ENCODE measurements at regions of chr14 and their contacts with region 1.

Region 1: DNA sequence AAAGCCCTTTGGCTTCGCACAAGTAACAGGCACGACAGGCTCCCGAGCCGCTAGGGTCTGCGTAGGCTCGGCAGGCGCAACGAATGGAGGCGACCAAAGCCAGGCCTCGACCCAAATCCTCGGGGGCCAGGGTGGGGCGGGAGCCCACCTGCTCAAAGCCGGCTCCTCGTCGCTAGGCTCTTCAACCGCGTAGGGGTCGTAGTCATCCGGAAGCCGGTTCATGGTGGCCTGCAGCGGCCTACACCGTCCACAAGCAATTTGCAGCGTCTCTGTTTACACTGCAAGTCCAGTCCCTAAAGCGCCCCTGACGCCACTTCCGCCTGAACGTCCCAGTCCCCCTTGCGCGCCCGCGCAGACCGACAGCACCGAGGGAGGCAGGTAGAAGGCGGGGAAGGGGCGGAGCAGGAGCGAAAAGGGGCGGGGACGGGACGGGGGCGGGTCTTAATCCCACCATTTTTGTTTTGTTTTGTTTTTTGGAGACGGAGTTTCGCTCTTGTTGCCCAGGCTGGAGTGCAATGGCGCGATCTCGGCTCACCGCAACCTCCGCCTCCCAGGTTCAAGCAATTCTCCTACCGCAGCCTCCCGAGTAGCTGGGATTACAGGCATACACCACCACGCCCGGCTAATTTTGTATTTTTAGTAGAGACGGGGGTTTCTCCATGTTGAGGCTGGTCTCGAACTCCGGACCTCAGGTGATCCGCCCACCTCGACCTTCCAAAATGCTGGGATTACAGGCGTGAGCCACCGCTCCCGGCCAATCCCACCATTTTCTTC is at the start of gene EAPP:
- DNase-seq: peak; percentile 95 to 99 (median 98)
- ATAC-seq: peak; percentile 99 to 100 (median 100)
- H3K4me3 ChIP-seq: peak within 1 kb of the TSS; percentile 61 to 90 (median 66)
- H3K27ac ChIP-seq: peak within 1 kb of the TSS; percentile 79 to 97 (median 86)
- H3K4me1 ChIP-seq: peaks cover 8 to 15% (median 11%) of the 10 kb centered on the region in 3 donors
- H3K27me3 ChIP-seq: no peaks in the 10 kb centered on the region
- CTCF ChIP-seq: no peak
- total RNA-seq, gene EAPP: 9.9 to 19.2 (median 15.4) TPM

Region 2: DNA sequence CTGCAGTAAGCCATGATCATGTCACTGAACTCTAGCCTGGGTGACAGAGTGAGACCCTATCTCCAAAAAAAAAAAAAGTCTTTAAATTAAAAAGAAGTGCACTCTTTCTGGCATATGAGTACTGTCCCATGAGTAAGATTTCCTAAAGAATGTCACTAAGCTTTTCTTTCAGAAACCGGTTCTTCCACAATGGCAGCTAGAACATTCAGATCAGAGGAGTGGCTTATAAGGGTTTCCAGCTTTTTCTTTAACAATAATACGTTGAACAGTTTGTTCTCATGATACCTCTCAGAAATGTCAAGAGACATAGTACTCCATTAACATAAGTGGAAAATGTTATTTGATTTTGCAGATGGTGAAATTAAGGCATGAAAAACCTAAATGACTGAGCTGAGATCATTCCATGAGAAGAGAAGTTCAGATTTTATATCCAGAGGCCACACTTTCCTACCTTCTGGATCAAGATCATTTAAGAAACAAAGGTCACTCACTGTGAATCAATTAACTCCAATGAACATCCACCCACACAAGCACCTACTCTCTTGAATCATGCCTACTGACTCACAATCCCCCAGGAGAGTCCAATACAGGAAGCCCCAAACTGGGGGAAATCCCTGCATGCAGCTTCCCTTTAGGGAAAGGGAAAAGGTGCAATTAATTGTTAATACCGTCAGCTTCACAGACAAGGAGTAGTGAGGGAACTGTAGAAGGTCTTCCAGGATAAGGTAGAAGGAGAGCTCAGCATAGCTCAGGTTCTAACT is 164.4 kb before region 1 on chr14:
- intact Hi-C with region 1: loop called in 1 of 3 experiments (anchors 10 kb)
- DNase-seq: no peak
- ATAC-seq: peak in 3 of 4 donors; percentile 53 to 63 (median 57)
- H3K4me3 ChIP-seq: no peak overlapping the region
- H3K27ac ChIP-seq: peak overlapping the region in 3 of 4 donors; percentile 17 to 62 (median 44)
- H3K4me1 ChIP-seq: peaks cover 0 to 27% (median 25%) of the 10 kb centered on the region in 3 donors
- H3K27me3 ChIP-seq: no peaks in the 10 kb centered on the region
- CTCF ChIP-seq: no peak